HepG2 (cell line): ENCODE measurements at regions of chr16 and their contacts with region 1.

Region 1: GRCh38 chr16:4580245-4580644 is 24.1 kb downstream of the C16orf96 start:
- DNase-seq: no peak
- ATAC-seq: no peak
- H3K4me3 ChIP-seq: no peak overlapping the region
- H3K27ac ChIP-seq: no peak overlapping the region
- H3K4me1 ChIP-seq: no peaks in the 10 kb centered on the region
- H3K27me3 ChIP-seq: no peaks in the 10 kb centered on the region
- CTCF ChIP-seq: no peak
- EP300 ChIP-seq: no peak
- POLR2A ChIP-seq: no peak
- RAD21 ChIP-seq: no peak

Region 2: DNA sequence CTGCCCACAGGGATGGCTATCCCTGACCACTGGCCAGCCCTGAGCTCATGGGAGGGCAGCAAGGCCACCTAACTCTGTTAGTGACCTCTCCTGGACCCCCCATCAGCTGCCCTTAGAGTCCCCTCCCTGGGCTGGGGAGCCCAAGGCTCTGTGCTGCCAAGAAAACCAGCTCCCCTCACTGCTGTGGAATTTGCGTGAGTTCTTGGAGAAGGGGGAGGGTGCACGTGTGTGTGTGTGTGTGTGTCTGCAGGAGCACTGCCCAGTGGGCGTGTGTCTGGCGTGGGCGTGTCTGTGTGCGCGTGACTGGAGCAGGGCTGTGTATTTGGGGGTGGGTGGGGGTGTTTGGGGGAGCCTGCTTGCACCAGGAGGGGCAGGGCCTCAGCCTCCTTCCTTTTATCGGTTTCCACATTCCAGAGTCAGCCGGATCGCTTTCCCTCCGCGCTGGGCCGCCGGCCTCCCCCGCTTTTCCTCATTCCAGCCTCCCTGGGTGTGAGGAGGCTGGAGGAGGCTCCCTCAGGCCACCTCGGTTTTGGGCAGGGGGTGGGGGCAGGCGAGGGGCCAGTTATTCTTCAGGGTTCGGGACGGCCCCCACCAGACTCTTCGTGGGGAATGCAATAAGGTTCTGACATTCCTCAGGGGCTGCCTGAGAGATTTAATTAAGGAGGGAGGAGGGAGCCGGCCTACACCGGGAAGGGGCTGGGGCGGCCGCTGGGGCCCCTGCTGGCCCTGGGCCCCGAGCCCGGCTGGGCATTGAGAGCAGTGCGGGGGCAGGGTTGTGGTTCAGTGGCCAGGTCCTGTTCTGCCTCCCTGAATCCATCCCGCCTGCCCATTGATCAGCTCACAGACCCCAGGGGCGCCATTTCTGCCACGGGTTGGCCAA is 206.1 kb before region 1 on chr16:
- CTCF ChIA-PET with region 1: no interaction called
- POLR2A ChIA-PET with region 1: no interaction called
- in situ Hi-C with region 1: no loop called
- intact Hi-C with region 1: no loop called
- DNase-seq: no peak
- ATAC-seq: no peak
- H3K4me3 ChIP-seq: peak overlapping the region; percentile 76 to 92 (median 82); a peak in 5 of 6 replicates
- H3K27ac ChIP-seq: peak overlapping the region; percentile 83
- H3K4me1 ChIP-seq: peaks cover 86% of the 10 kb centered on the region
- H3K27me3 ChIP-seq: no peaks in the 10 kb centered on the region
- CTCF ChIP-seq: no peak
- EP300 ChIP-seq: no peak
- POLR2A ChIP-seq: no peak
- RAD21 ChIP-seq: no peak

Region 3: DNA sequence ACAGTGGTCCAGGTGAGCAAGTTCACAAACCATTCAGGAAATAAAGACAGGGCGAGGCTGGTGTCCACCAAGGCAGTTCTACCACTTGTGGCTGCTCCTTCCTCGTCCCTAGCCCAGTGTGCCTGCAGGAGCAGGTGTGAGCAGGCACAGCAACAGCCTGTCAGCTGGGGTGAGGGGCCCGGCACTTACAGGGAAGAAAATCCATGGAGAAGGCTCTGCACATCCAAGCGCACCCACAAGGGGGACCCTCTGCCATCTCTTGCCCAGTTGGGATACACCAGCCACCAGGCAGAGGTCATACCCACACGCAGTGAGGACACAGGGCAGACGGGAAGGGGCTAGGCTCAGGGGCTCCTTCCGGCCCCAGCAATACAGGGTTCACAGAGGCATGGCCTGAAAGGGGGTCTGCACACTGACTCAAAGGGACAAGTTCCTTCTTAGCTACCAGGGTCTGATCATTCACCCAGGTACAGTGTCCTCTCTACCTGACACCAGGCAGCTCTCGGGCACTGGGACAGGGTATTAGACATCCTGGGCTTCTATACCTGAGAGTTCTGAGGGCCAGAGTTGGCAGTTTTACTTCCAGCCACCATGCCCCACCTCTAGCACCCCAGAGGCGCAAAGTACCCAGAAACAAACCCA is 68.7 kb before region 1 on chr16:
- CTCF ChIA-PET with region 1: interaction called, 5 read pairs
- POLR2A ChIA-PET with region 1: no interaction called
- in situ Hi-C with region 1: loop called (anchors 10 kb)
- intact Hi-C with region 1: loop called (anchors 2 kb)
- DNase-seq: peak; percentile 60
- ATAC-seq: peak; percentile 81
- H3K4me3 ChIP-seq: no peak overlapping the region
- H3K27ac ChIP-seq: no peak overlapping the region
- H3K4me1 ChIP-seq: peaks cover 15% of the 10 kb centered on the region; the same call in 1 of the 2 replicates
- H3K27me3 ChIP-seq: no peaks in the 10 kb centered on the region
- CTCF ChIP-seq: peak; percentile 76
- EP300 ChIP-seq: no peak
- POLR2A ChIP-seq: 0 out of 4 replicates have a peak, but pooled peaks of 1 of the 2 experiments have one; percentile 18
- RAD21 ChIP-seq: peak; percentile 66

Region 4: GRCh38 chr16:4517812-4518680 is 62.2 kb before region 1 on chr16:
- CTCF ChIA-PET with region 1: interaction called, 8 read pairs
- POLR2A ChIA-PET with region 1: no interaction called
- in situ Hi-C with region 1: loop called (anchors 10 kb)
- intact Hi-C with region 1: loop called (anchors 1 kb)
- DNase-seq: peak; percentile 34
- ATAC-seq: peak; percentile 74
- H3K4me3 ChIP-seq: no peak overlapping the region
- H3K27ac ChIP-seq: no peak overlapping the region
- H3K4me1 ChIP-seq: peaks cover 15% of the 10 kb centered on the region; the same call in 1 of the 2 replicates
- H3K27me3 ChIP-seq: no peaks in the 10 kb centered on the region
- CTCF ChIP-seq: peak; percentile 81
- EP300 ChIP-seq: no peak
- POLR2A ChIP-seq: no peak
- RAD21 ChIP-seq: peak; percentile 79

Region 5: GRCh38 chr16:4556112-4556511 is 24.1 kb before region 1 on chr16 and contains the start of gene C16orf96:
- CTCF ChIA-PET with region 1: no interaction called
- POLR2A ChIA-PET with region 1: no interaction called
- in situ Hi-C with region 1: no loop called
- intact Hi-C with region 1: no loop called
- DNase-seq: no peak
- ATAC-seq: peak; percentile 67
- H3K4me3 ChIP-seq: no peak within 1 kb of the TSS
- H3K27ac ChIP-seq: no peak within 1 kb of the TSS
- H3K4me1 ChIP-seq: peaks cover 6% of the 10 kb centered on the region; the same call in 1 of the 2 replicates
- H3K27me3 ChIP-seq: peaks cover 3 to 7% of the 10 kb centered on the region in 2 experiments; a peak in 2 of 5 replicates
- CTCF ChIP-seq: no peak
- EP300 ChIP-seq: no peak
- POLR2A ChIP-seq: no peak
- RAD21 ChIP-seq: no peak
- total RNA-seq, gene C16orf96: not detected in 2 replicates

Region 6: DNA sequence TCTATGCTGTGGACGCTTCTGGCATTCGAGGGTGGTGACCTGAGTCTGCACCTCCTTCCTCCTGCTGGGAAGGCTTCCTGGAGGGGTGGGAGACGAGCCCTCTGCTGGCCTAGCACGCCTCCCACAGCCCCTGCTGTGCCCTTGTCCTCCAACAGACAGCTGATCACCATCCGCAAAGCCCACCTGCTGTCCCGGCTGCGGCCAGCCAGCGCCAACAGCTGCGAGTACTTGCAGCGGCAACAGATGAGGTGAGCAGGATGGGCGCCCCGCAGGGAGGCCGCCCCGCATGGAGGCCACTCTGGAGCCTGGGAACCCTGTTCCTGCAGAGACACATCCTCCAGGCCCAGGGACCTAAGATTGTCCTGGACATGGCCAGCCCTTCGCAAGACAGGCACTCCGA is 12.8 kb after region 1 on chr16:
- CTCF ChIA-PET with region 1: no interaction called
- POLR2A ChIA-PET with region 1: no interaction called
- in situ Hi-C with region 1: no loop called
- intact Hi-C with region 1: no loop called
- DNase-seq: no peak
- ATAC-seq: peak; percentile 42
- H3K4me3 ChIP-seq: no peak overlapping the region
- H3K27ac ChIP-seq: no peak overlapping the region
- H3K4me1 ChIP-seq: peaks cover 3% of the 10 kb centered on the region; the same call in 1 of the 2 replicates
- H3K27me3 ChIP-seq: peaks cover 4 to 54% of the 10 kb centered on the region in 2 experiments
- CTCF ChIP-seq: no peak
- EP300 ChIP-seq: no peak
- POLR2A ChIP-seq: no peak
- RAD21 ChIP-seq: no peak

Region 7: DNA sequence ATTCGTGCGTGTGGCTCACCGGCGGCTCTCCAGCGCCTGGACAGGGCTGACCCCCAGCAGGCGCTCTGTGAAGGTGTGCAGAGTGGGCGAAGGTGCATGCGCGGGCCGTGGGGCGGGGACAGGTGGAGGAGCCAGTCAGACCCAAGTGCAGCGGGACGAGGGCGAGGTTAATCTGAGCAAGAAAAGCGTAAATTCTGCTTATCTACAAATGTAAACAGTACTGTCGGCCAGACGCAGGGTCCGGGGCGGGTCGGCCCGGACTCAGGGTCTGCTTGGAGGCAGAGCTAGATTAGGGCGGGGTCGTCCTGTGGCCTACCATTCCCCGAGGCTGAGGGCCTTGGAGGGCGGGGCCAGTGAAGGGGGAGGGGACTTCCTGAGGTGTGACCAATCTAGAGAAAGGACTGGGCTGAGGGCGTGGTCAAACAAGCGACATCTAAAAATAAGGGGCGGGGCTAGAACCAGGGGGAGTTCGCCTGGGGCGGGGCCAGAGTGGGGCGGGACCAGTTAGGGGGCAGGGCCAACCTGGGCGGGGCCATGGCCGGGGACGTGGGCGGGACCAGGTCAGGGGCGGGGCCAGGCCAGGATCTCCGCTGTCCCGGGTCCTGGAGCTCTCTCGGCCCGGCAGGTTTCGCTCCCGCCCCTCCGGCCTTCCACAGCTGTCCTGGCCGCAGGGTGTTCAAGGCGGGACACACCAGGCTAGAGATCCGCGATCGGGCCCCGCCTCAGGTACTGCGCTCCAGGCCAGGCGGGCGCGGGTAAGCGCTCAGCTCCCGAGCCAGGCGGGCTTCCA is 377.7 kb after region 1 on chr16 and contains the start of gene SEC14L5:
- CTCF ChIA-PET with region 1: no interaction called
- POLR2A ChIA-PET with region 1: no interaction called
- in situ Hi-C with region 1: no loop called
- intact Hi-C with region 1: no loop called
- DNase-seq: peak; percentile 100
- ATAC-seq: peak; percentile 93
- H3K4me3 ChIP-seq: peak within 1 kb of the TSS; percentile 62 to 77 (median 62)
- H3K27ac ChIP-seq: peak within 1 kb of the TSS; percentile 77
- H3K4me1 ChIP-seq: peaks cover 23% of the 10 kb centered on the region
- H3K27me3 ChIP-seq: peaks cover 0 to 18% of the 10 kb centered on the region in 2 experiments; a peak in 3 of 5 replicates
- CTCF ChIP-seq: peak; percentile 61
- EP300 ChIP-seq: no peak; a peak in 1 of 4 replicates
- POLR2A ChIP-seq: peak; percentile 74 to 85
- RAD21 ChIP-seq: peak; percentile 41; the same call in 1 of the 2 replicates
- total RNA-seq, gene SEC14L5: 0.36 and 0.42 TPM in 2 replicates